GM10248 (cell line): ENCODE measurements at regions of chr18 and their contacts with region 1.

Region 1: GRCh38 chr18:48777026-48777743 is 173.6 kb downstream of the SMAD7 start:
- DNase-seq: peak; percentile 91
- CTCF ChIP-seq: peak; percentile 99

Region 2: GRCh38 chr18:48766026-48766425 is 11.2 kb before region 1 on chr18:
- CTCF ChIA-PET with region 1: interaction called, 34 read pairs
- POLR2A ChIA-PET with region 1: no interaction called
- DNase-seq: no peak
- CTCF ChIP-seq: no peak

Region 3: GRCh38 chr18:48790226-48790874 is 13.2 kb after region 1 on chr18:
- CTCF ChIA-PET with region 1: interaction called, 15 read pairs
- POLR2A ChIA-PET with region 1: no interaction called
- DNase-seq: no peak
- CTCF ChIP-seq: no peak

Region 4: GRCh38 chr18:48800876-48801727 is 23.9 kb after region 1 on chr18:
- CTCF ChIA-PET with region 1: interaction called, 28 read pairs
- POLR2A ChIA-PET with region 1: no interaction called
- DNase-seq: peak; percentile 81
- CTCF ChIP-seq: no peak

Region 5: GRCh38 chr18:48813833-48814489 is 36.8 kb after region 1 on chr18:
- CTCF ChIA-PET with region 1: interaction called, 10 read pairs
- POLR2A ChIA-PET with region 1: no interaction called
- DNase-seq: no peak
- CTCF ChIP-seq: no peak

Region 6: DNA sequence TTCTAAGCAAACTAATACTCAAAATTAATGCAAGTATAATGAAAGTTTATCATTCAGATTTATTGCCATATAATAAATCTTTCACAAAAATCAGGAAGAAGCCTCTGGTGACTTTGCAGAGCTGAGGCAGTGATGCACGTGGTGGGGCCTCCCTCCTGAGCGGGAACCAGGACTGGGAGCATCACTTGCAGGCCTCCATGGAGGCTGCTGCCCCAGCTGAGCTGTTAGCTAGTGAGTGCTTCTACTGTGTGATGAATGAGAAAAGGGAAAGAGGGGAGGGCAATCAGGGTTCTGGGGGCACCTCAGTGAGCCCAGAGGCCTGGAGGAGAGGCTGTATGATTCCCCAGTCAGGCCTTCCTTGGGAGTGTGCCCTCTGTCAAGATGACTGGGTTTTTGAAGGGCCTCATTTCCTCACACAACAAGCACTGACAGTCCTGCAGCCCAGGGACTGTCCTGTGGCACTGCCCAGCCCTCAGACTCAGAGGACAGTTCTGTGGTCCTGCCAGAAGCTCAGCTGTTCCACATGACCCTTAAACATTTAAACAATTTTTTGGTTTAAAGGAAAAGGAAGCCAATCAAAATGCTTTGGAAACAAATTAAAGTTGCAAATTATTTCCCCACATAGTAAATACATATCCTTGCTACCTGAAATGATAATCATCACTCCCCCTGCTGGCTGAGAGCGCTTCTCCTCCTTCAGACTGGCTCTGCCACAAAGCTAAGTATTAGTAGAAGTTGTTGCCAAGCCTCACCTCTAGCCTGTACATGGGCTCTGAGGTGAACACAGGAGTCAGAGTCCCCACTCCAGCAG is 264.5 kb after region 1 on chr18:
- CTCF ChIA-PET with region 1: interaction called, 10 read pairs
- POLR2A ChIA-PET with region 1: no interaction called
- DNase-seq: no peak
- CTCF ChIP-seq: peak; percentile 39

Region 7: DNA sequence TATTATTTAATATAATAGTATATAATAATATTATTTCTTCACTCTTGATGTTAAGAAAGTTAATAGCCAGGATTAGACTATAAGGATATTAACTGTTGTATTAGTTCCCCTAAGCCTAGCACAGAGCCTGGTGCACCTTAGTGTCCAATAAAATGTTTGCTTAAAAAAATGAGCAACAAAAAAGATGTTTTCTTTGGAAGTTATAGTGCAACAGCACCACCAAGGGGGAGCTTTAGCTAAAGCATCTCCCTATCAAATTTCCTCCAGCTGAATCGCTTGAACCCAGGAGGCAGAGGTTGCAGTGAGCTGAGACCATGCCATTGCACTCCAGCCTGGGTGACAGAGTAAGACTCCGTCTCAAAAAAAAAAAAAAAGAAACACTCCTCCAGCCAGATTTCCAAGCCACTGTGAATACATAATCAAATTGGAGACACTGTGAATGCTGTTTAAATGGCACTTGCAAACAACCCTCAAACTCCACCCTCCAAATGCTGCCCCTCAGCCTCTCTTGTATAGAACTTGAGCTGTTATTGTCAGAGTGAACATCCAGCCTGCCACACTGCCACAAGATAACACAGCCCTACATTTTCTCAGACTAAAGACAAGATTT is 461.4 kb after region 1 on chr18:
- CTCF ChIA-PET with region 1: interaction called, 11 read pairs
- POLR2A ChIA-PET with region 1: no interaction called
- DNase-seq: no peak
- CTCF ChIP-seq: no peak